Lower leg skin (tissue), 4 donors: ENCODE measurements at regions of chr5 and their contacts with region 1.

Region 1: DNA sequence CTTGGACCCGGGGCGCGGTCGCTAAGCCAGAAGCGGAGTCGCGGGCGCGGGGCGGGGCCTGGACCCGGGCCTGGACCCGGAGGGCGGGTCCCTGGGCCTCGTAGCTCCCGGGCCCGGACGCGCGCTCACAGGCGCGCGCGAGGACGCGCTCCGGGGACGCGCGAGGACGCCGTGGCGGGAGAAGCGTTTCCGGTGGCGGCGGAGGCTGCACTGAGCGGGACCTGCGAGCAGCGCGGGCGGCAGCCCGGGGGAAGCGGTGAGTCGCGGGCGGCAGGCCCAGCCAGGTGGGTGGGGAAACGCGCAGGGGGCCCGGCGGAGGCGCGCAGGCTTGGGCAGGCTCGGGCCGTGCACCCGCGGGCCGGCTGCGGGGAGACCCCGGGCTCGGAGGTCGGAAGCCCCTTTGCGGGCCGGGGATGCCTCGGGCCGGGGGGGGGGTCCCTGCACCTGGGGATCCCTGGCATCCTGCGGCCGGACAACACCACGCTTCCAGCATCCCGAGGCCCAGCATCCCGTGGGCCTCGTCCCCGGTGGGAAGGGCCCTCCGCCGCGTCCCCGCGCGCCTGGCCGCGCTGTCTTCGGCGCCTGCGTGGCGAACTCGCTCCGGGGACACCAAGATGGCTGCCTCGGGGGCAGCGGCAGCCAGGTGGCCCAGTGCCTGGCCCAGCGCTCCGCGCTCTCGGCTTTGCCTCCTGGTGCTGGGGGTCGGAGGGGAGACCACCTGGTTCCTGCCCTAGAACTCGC is at the start of gene SFXN1:
- DNase-seq: peak; percentile 59 to 95
- H3K4me3 ChIP-seq: peak within 1 kb of the TSS; percentile 74
- CTCF ChIP-seq: no peak
- POLR2A ChIP-seq: no peak
- total RNA-seq, gene SFXN1: 15.0 to 35.8 (median 16.6) TPM

Region 2: GRCh38 chr5:173829817-173830216 is 1648.7 kb before region 1 on chr5:
- intact Hi-C with region 1: loop called (anchors 5 kb)
- DNase-seq: no peak
- H3K4me3 ChIP-seq: no peak overlapping the region
- CTCF ChIP-seq: no peak
- POLR2A ChIP-seq: no peak